ENCODE measurements at regions of chr1 and their contacts with region 1.

Region 1: DNA sequence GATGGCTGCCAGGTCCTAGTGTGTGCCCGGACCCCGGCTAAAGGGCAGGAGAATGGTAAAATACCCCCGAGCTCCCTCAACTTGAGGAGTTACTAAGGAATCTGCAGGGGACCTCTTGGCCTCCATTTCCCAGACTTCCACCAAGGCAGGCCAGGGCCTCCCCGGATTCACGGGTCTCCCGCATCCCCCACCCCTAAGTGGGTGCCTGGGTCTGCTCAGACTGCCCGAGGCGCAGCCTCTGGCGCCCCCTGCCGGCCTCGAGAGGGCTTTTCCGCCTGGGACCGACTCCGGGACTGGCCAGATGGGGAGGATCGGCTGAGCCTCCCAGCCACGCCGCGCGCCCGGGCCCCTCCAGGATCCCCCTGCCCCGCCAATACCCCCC is 1.7 kb downstream of the PLEKHG5 start:
- DNase-seq: no peak
- ATAC-seq: peak; percentile 60 to 70
- H3K4me3 ChIP-seq: peak overlapping the region; percentile 44 to 66 (median 53)
- H3K27ac ChIP-seq: peak overlapping the region in 1 of 4 donors; percentile 2
- H3K4me1 ChIP-seq: peaks cover 7 to 12% of the 10 kb centered on the region in 2 donors
- H3K27me3 ChIP-seq: peaks cover 13 to 20% (median 15%) of the 10 kb centered on the region in 3 donors
- CTCF ChIP-seq: peak; percentile 37 to 85 (median 77)
- POLR2A ChIP-seq: no peak

Region 2: GRCh38 chr1:6127587-6128163 is 362.1 kb before region 1 on chr1:
- in situ Hi-C with region 1: no loop called
- intact Hi-C with region 1: no loop called
- DNase-seq: peak; percentile 21 to 44
- ATAC-seq: peak in 1 of 2 donors; percentile 60
- H3K4me3 ChIP-seq: peak overlapping the region in 2 of 4 donors; percentile 3 to 4
- H3K27ac ChIP-seq: no peak overlapping the region
- H3K4me1 ChIP-seq: no peaks in the 10 kb centered on the region
- H3K27me3 ChIP-seq: peaks cover 0 to 6% (median 0%) of the 10 kb centered on the region in 3 donors
- CTCF ChIP-seq: no peak
- POLR2A ChIP-seq: no peak

Region 3: GRCh38 chr1:6280761-6281451 is 208.9 kb before region 1 on chr1:
- in situ Hi-C with region 1: no loop called
- intact Hi-C with region 1: no loop called
- DNase-seq: no peak
- ATAC-seq: no peak
- H3K4me3 ChIP-seq: no peak overlapping the region
- H3K27ac ChIP-seq: no peak overlapping the region
- H3K4me1 ChIP-seq: peaks cover 7 to 13% of the 10 kb centered on the region in 2 donors
- H3K27me3 ChIP-seq: no peaks in the 10 kb centered on the region
- CTCF ChIP-seq: peak in 1 of 5 experiments; percentile 24
- POLR2A ChIP-seq: no peak

Region 4: GRCh38 chr1:6519935-6520671 is 30.3 kb after region 1 on chr1:
- in situ Hi-C with region 1: no loop called
- intact Hi-C with region 1: loop called (anchors 2 kb)
- DNase-seq: no peak
- ATAC-seq: peak in 1 of 2 donors; percentile 20
- H3K4me3 ChIP-seq: no peak overlapping the region
- H3K27ac ChIP-seq: no peak overlapping the region
- H3K4me1 ChIP-seq: peaks cover 0 to 10% of the 10 kb centered on the region in 2 donors
- H3K27me3 ChIP-seq: no peaks in the 10 kb centered on the region
- CTCF ChIP-seq: no peak
- POLR2A ChIP-seq: no peak

Region 5: DNA sequence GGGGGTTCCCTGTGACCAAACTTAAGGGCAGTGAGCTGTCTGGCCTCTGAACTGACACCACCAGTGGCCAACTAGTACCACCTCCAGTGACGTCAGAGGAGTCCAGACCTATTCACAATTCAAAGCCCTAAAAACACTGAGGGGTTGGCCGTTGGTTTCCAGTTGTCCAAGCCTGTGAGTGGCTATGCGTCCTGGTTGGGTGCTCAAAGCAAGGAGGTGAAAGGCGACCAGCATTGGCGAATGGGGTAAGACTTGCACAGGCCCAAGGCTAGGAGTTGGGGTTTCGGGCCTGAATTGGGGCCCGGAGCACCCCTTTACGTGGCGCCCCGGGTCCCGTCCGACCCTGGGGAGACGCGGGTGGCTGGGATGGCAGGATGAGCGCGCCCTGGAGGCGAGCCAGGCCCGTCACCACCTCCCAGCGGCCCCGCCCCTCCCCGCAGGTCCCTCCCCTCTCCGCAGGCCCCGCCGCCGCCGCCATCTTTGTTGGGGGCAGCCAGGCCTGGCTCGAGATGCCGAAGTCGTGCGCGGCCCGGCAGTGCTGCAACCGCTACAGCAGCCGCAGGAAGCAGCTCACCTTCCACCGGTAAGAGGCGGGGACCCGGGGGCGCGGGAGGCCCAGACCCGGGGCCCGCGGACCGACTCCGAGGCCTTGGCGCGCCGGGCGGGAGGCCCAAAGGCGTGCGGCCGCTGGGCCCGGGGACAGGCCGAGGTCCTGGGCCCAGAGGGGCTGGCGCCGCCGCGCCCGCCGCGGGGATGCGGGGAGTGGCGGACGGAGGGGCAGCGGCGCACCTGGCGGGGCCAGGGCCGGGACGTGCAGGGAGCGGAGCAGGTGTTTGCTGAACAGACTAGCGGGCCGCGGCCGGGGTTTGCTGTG is 135.2 kb after region 1 on chr1 and contains the start of gene THAP3:
- in situ Hi-C with region 1: loop called in 1 of 4 experiments (anchors 25 kb)
- intact Hi-C with region 1: no loop called
- DNase-seq: peak; percentile 75 to 83
- ATAC-seq: peak; percentile 81 to 89
- H3K4me3 ChIP-seq: peak within 1 kb of the TSS; percentile 68 to 83 (median 72)
- H3K27ac ChIP-seq: peak within 1 kb of the TSS; percentile 80 to 92 (median 90)
- H3K4me1 ChIP-seq: peaks cover 22 to 24% of the 10 kb centered on the region in 2 donors
- H3K27me3 ChIP-seq: no peaks in the 10 kb centered on the region
- CTCF ChIP-seq: peak in 1 of 5 experiments; percentile 22
- POLR2A ChIP-seq: peak; percentile 37 to 46
- total RNA-seq, gene THAP3: 16.7 to 31.0 (median 24.2) TPM

Region 6: DNA sequence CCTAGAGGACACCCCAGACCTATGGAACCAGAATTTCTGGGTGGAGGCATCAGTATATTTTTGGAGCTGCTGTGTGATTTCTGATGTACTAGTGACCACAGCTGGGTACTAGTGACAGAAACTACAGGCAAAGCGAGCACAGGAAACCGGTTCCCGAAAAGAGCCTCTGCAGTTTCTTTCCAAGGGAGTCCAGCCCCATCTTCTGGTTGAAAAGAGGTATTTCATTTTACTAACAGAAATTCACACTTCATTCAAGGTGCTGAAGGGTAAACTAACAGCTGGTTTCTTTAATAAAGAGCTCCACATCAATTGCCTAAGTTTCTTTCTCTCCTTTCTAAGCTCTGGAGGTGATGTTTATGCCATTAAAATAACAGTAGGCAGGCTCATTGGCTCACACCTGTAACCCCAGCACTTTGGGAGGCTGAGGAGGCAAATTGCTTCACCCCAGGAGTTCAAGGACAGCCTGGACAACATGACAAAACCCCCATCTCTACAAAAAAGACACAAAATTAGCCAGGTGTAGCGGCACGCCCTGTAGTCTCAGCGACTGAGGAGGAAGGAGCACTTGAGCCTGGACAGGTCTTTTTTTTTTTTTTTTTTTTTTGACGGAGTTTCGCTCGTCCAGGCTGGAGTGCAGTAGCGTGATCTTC is 156.8 kb after region 1 on chr1:
- in situ Hi-C with region 1: loop called (anchors 10 to 25 kb)
- intact Hi-C with region 1: loop called (anchors 1 kb)
- DNase-seq: no peak
- ATAC-seq: peak; percentile 29 to 67
- H3K4me3 ChIP-seq: no peak overlapping the region
- H3K27ac ChIP-seq: no peak overlapping the region
- H3K4me1 ChIP-seq: no peaks in the 10 kb centered on the region
- H3K27me3 ChIP-seq: no peaks in the 10 kb centered on the region
- CTCF ChIP-seq: peak; percentile 43 to 61 (median 60)
- POLR2A ChIP-seq: no peak

Measured in gastrocnemius medialis (tissue), 4 donors.